Transverse colon (tissue), 4 donors: ENCODE measurements at regions of chr12 and their contacts with region 1.

Region 1: DNA sequence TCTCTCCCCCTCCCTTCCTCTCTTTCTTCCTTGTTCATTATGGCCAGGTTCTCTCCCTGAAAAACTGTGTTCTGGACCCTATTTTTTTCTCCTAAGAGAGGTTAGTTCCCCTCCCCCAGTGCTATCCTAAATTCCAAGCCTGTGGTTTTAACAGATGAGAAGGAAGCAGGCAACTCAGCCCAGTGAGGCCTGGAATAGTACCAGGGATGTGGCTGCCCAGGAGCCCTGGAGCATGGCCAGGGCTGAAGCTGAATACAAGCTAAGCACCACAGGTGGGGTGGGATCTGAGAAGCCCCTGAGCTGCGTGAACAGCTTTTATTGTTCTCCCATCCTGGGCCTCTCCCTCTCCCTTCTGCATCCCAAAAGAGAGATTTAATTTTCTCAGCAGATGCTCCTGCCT is 1581.3 kb upstream of the TMEM132C start:
- DNase-seq: no peak
- H3K4me3 ChIP-seq: no peak overlapping the region
- H3K27ac ChIP-seq: no peak overlapping the region
- H3K4me1 ChIP-seq: no peaks in the 10 kb centered on the region
- H3K27me3 ChIP-seq: no peaks in the 10 kb centered on the region
- CTCF ChIP-seq: no peak
- EP300 ChIP-seq: no peak
- POLR2A ChIP-seq: no peak

Region 2: DNA sequence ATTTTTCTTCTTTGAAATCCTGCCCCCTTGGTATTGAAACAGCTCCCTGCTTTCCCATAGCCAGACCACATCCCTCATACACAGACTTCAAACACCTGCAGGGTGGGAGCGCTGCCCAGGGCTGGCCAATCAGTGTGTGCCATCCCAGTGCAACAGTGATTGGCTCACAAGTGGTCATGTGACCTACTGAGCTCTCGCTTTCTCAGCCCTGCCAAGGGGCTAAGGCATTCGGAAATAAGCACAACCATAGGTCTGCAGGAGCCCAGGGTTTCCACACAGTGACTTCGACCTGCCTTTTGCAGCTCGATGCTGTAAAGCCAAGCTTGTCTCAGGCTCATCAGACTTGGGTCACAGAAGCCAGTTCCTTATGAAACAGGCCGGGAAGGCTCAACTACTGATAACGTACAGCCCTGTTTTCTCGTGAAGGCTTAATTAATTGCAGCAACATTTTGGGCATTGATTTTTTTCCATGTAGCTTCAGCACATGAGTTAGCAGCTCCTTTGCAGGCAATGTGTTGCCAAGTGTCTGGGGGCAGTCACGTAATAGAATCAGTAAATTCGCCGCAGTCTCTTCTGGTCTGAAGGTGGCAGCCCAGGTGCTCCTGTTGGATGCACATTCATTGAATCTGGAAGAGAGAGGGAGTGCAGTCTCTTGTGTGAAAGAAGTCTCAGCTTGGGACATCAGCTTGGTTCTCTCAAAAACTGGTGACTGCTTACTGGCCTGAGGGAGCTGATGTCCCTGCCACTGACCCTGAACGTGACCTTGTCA is 528.6 kb before region 1 on chr12:
- in situ Hi-C with region 1: no loop called
- intact Hi-C with region 1: no loop called
- DNase-seq: no peak
- H3K4me3 ChIP-seq: no peak overlapping the region
- H3K27ac ChIP-seq: no peak overlapping the region
- H3K4me1 ChIP-seq: no peaks in the 10 kb centered on the region
- H3K27me3 ChIP-seq: no peaks in the 10 kb centered on the region
- CTCF ChIP-seq: no peak
- EP300 ChIP-seq: no peak
- POLR2A ChIP-seq: no peak

Region 3: GRCh38 chr12:127351481-127352010 is 665.9 kb after region 1 on chr12:
- in situ Hi-C with region 1: no loop called
- intact Hi-C with region 1: loop called (anchors 5 kb)
- DNase-seq: no peak
- H3K4me3 ChIP-seq: no peak overlapping the region
- H3K27ac ChIP-seq: no peak overlapping the region
- H3K4me1 ChIP-seq: no peaks in the 10 kb centered on the region
- H3K27me3 ChIP-seq: no peaks in the 10 kb centered on the region
- CTCF ChIP-seq: no peak
- EP300 ChIP-seq: no peak
- POLR2A ChIP-seq: no peak